Upper lobe of right lung (tissue), 1 donor: ENCODE measurements at regions of chr2 and their contacts with region 1.

Region 1: DNA sequence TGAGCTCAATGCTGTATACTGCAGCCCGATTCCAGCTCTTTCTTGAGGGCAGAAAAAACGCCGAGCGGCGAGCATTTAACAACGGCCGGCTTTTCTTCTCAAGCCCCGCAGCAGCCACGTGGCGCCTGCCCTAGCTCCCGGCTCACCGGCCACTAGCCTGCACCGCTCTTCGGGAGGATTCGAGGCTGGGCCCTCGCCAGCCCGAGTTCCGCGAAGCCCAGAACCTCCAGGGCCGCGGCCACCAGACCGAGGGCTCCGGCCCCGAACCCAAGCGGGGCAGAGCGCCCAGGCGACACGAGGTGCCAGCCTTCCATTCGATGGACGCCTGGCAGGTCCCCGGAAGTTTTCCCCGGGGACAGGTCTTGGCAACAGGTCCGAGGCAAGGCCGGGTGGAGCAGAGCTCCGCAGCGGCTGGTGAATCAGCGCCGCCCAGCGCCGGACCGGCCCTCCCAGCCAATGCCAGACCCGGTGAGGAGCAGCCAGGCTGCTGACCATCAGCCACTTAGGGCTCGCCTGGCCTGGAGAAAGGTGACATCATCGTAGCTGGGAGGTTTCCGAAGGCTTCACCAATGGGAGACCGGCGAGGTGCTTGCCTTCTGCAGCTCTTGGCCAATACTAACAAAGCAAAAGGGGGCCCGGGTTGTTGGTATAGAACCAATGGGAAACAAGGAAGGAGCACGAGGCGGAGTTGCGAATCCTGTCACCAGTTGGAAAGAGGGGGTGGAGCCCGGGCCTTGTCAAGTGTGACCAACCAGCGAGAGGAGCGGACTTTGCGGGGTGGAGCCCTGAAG is 544 bp upstream of the MXD1 start:
- DNase-seq: peak; percentile 98
- ATAC-seq: peak; percentile 95
- H3K4me3 ChIP-seq: peak overlapping the region; percentile 79
- H3K27ac ChIP-seq: peak overlapping the region; percentile 91
- H3K4me1 ChIP-seq: peaks cover 4% of the 10 kb centered on the region
- H3K27me3 ChIP-seq: no peaks in the 10 kb centered on the region
- CTCF ChIP-seq: peak; percentile 29

Region 2: DNA sequence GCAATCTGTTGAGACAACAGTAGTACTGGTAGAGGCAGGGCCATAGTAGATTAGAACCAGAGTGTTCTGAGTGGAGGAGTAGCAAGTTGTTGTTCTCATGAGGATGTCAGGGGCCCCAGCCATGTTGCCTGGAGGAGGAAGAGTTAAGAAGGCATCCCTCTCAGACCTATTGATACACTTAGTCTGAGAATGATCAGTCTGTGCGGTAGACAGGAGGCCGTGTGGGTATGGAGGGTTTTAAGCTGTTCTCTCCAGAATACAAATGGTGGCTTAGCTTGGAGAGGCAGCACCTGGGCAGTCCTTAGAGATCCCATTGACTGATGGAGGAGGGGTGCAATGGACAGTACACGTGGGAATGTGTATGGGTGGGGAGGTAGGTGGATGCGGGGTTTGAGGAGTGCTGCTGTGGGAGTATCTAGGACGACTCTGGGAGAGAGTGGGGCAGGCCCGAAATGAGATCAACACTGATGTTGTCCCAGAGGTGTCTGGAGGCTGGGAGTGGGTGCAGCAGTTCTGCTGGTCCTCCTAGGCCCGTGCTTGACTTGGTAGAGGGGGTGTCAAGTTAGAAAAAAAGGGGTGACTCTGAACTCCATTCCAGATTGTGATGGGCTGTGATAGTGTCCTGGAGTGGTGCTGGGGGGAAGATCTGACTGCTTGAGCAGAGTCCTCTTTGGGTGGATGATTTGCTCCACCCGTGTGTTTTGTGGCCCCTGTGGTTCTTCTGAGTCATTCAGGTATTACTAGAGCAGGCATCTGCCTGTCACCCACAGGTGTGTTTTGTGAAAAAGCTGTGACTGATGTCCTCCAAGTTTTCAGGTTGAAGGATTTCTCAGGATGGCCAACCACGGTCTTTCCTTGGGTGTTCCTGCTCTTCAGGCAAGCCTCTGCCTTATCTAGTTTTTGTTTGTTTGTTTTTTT is 231.7 kb after region 1 on chr2:
- intact Hi-C with region 1: loop called (anchors 5 kb)
- DNase-seq: peak; percentile 38
- ATAC-seq: no peak
- H3K4me3 ChIP-seq: no peak overlapping the region
- H3K27ac ChIP-seq: no peak overlapping the region
- H3K4me1 ChIP-seq: peaks cover 12% of the 10 kb centered on the region
- H3K27me3 ChIP-seq: no peaks in the 10 kb centered on the region
- CTCF ChIP-seq: no peak

Region 3: DNA sequence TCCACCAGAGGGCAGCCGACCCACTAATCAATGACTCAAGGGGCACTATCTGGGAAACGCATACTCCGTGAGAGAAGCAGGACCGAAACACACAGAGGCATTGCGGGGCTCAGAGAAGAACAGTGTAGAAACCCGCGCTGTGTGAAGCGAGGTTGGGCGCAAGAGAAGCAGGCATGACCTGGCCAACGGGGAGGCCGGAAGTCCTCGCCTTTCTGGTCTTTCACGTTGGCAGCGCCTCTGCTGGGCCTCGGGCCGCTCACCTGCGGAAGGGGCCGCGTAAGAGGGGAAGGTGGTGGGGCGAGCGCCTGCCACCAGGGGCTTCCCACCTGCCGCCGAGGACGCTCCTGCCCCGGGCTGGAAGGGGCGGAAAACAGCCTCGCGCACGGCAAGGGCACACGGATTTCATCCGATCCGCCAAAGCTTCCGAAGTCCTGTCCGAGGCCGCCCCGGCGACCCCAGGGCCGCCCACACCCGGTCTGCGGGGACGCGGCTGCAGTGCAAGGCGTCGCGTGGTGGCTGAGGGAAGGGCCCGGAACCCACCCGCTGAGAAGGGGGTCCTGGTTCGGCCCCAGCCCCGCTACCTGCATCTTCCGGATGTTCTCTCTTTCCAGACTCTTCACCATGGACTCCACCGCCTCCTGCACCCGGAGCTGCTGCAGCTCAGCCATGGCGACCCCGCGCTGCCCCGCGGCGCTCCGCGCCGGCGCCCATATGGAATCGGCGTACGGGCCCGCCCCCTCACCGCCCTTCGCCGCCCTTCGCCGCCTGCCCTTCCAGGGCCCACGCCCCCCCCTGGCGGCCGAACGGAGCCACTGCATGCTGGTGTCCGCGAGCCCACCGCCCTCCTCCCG is 387.2 kb after region 1 on chr2 and contains the start of gene FAM136A:
- intact Hi-C with region 1: loop called (anchors 10 kb)
- DNase-seq: peak; percentile 95
- ATAC-seq: peak; percentile 98
- H3K4me3 ChIP-seq: peak within 1 kb of the TSS; percentile 86
- H3K27ac ChIP-seq: peak within 1 kb of the TSS; percentile 83
- H3K4me1 ChIP-seq: peaks cover 9% of the 10 kb centered on the region
- H3K27me3 ChIP-seq: no peaks in the 10 kb centered on the region
- CTCF ChIP-seq: peak; percentile 96
- total RNA-seq, gene FAM136A: 21.7 TPM